GM23248 (cell line): ENCODE measurements at regions of chr3 and their contacts with region 1.

Region 1: DNA sequence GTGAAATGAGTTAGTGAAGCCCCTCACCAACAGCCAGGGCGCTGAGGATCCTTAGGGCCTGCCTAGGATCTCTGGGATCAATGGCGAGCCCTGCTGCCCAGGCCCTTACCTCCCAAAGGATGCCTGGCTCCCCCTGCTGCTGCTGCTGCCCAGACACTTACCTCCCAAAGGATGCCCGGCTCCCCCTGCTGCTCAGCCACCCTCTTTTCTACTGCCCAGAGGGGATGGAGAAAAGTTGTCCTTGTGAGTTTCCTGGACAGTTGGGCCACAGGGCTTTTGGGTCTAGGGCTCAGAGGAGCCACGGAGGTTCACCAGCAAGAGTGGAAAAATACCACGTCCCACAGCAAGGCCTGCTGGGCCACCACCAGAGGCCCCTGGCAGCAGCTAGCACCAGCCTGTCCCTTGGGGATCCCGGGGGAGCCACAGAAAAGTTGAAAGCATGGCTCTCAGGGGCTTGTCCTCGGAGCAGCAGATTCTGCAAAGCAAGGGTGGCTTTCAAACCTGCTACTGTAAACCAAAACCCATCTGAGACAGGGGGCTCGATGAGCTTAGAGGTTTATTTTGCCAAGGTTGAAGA is 59.4 kb downstream of the SLC6A6 start:
- DNase-seq: peak; percentile 80
- H3K4me3 ChIP-seq: no peak overlapping the region
- H3K27ac ChIP-seq: no peak overlapping the region
- H3K4me1 ChIP-seq: peaks cover 26% of the 10 kb centered on the region
- H3K27me3 ChIP-seq: no peaks in the 10 kb centered on the region

Region 2: DNA sequence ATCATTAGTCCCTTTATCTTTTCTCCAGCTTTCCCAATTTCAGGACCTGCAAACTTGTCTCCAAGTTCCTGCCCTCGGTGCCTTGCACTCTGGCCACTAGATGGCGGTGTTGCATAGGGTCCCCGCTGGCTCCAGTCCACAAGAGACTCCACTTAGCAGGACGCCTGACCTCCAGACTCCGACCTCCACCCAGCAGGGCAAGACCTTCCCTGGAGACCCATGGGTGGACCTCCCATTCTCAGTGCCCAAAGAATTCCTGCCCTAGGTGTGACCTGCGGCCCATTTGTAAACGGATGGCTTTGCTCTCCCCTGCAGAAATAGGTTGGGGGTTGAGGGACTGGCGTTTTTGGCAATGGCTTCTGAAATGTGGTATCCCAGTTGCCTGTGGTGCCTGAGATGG is 200.6 kb before region 1 on chr3:
- in situ Hi-C with region 1: loop called (anchors 5 kb)
- DNase-seq: peak; percentile 77
- H3K4me3 ChIP-seq: no peak overlapping the region
- H3K27ac ChIP-seq: no peak overlapping the region
- H3K4me1 ChIP-seq: peaks cover 7% of the 10 kb centered on the region
- H3K27me3 ChIP-seq: no peaks in the 10 kb centered on the region

Region 3: DNA sequence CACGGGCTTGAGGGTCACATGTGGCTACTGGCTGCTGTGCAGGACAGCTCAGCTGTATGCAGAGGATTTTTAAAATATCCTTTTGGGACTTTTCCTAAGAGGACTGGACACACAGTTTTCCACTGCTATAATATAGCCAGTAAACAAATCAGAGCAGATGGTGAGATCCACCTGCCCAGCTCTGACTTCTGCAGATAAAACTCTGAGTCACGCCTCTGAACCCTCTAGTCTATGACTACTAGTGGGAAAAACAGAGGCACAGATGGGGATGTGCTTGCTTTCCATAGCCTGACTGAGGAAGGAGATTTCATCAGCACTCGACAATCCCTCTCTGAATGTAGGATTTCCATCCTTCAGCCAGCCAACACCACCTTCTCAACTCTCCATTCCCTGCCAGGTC is 1014.5 kb after region 1 on chr3:
- in situ Hi-C with region 1: no loop called
- DNase-seq: peak; percentile 69
- H3K4me3 ChIP-seq: no peak overlapping the region
- H3K27ac ChIP-seq: no peak overlapping the region
- H3K4me1 ChIP-seq: no peaks in the 10 kb centered on the region
- H3K27me3 ChIP-seq: no peaks in the 10 kb centered on the region